Activated CD4-positive, alpha-beta T cell treated with anti-CD3 and anti-CD28 coated beads for 36 hours (primary cell): ENCODE measurements at regions of chr17 and their contacts with region 1.

Region 1: DNA sequence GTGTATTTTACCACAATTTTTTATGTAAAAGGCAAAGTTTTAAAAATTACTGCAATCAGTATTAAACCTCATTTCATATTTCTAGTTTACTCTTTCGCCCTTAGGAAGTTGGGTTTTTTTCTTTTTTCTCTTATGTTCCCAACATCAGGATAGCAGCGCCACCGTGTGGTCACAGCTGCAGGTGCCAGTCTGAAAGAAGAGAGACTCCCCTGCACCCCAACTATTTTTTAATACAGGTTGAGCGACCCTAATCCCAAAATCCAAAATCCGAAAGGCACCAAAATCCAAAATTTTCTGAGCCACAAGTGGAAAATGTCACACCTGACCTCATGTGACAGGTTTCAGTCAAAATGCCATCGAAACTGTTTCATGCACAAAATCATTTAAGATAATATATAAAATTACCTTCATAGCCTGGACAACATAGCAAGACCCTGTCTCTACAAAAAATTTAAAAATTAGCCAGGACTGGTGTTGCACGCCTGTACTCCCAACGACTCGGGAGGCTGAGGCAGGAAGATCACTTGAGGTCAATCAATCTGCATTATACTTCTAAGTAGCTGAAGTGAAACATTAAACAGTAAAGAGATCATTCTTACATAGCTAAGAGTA is 21.8 kb upstream of the ASGR2 start:
- DNase-seq: peak; percentile 89
- ATAC-seq: no peak
- H3K4me3 Mint-ChIP-seq: no peak overlapping the region
- H3K27ac Mint-ChIP-seq: no peak overlapping the region
- H3K4me1 Mint-ChIP-seq: peaks cover 21% of the 10 kb centered on the region
- H3K27me3 Mint-ChIP-seq: no peaks in the 10 kb centered on the region

Region 2: DNA sequence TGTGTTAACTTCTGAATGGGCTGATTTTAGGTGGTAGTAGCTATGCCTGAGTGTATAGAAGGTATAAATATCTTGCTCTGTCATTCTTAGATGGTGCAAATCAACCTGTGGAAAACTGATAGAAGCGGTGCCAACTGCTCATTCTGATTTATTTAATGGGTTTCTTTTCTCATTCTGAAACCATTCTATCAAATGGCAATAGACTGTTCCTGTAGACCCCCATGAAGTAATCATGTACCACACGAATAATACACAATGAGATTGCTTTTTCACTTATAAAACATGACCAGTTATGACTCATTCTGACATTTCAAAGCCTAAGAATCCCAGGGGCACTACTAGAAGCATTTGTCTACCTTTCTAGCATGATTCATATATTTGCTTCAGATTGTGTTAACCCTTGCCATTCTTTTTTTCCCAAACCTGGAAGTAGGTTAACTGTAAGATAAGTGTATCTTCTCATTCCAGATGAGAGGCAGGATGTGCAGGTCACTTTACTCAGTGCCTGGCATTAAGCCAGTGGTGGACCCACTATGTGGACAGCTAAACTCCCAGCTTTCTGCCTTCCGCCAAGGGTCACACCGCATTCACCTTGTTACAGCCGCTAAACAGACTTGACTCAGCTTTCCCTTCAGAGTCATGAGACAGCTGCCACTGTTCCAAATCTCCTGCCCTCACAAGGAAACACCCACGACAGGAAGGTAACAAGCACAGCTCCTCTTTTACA is 76.0 kb before region 1 on chr17:
- CTCF ChIA-PET with region 1: interaction called, 110 read pairs
- POLR2A ChIA-PET with region 1: interaction called, 10 read pairs
- intact Hi-C with region 1: loop called (anchors 2 kb)
- DNase-seq: peak; percentile 78
- ATAC-seq: peak; percentile 87
- H3K4me3 Mint-ChIP-seq: peak overlapping the region; percentile 49
- H3K27ac Mint-ChIP-seq: peak overlapping the region; percentile 88
- H3K4me1 Mint-ChIP-seq: peaks cover 26% of the 10 kb centered on the region
- H3K27me3 Mint-ChIP-seq: no peaks in the 10 kb centered on the region

Region 3: DNA sequence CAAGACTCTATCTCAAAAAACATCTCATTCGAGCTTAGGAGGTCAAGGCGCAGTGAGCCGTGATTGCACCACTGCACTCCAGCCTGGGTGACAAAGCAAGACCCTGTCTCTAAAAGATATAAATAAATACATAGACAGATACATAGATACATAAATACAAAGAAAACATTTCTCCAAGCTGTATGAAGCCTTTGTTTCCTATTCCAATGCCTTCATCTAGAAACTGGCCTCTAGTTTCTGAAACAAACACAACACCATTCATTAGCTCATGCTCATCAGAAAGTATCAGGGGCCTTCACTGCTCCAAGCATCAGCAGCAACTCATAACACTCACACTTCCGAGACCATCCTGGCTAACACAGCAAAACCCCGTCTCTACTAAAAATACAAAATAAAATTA is 11.4 kb before region 1 on chr17:
- CTCF ChIA-PET with region 1: interaction called, 11 read pairs
- POLR2A ChIA-PET with region 1: no interaction called
- intact Hi-C with region 1: no loop called
- DNase-seq: no peak
- ATAC-seq: no peak
- H3K4me3 Mint-ChIP-seq: no peak overlapping the region
- H3K27ac Mint-ChIP-seq: no peak overlapping the region
- H3K4me1 Mint-ChIP-seq: no peaks in the 10 kb centered on the region
- H3K27me3 Mint-ChIP-seq: peaks cover 4% of the 10 kb centered on the region

Region 4: DNA sequence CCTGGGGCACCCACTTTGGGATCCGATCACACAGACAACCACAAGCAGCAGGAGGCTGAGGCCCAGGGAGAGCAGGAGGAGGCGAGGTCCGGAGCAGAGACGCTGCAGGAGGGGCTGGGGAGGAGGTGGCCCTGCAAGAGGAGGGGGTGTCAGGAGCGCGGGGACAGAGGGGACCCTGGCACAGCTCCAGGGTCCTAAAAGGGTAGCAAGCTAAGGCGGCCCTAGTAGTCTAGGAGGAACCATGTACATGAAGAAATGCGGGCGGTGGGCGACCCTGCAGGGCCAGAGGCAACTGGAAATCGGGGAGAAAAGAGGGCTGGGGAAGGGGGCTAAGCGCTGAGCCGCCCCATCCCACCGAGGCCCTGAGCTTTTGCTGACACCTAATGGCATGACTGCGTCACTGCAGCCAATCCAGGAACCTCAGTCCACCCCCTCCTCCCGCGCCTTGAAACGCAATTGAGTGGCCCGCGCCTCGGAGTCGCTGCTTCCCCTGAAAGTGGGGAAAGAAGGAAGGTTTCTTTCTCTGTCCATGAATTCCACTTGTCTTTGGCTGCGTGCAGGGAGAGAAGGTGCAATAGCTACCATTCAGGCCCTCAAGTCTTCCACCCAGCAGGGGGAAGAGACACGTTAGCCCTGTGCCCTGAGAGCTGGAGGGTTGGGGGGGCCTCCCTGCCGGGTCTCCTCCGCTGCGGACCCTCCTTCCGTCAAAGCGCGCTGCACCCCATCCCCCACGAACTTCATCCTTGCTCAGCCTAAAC is 41.0 kb after region 1 on chr17:
- CTCF ChIA-PET with region 1: interaction called, 14 read pairs
- POLR2A ChIA-PET with region 1: no interaction called
- intact Hi-C with region 1: loop called (anchors 1 to 5 kb)
- DNase-seq: peak; percentile 82
- ATAC-seq: peak; percentile 82
- H3K4me3 Mint-ChIP-seq: peak overlapping the region; percentile 56
- H3K27ac Mint-ChIP-seq: no peak overlapping the region
- H3K4me1 Mint-ChIP-seq: peaks cover 11% of the 10 kb centered on the region
- H3K27me3 Mint-ChIP-seq: peaks cover 11% of the 10 kb centered on the region

Region 5: DNA sequence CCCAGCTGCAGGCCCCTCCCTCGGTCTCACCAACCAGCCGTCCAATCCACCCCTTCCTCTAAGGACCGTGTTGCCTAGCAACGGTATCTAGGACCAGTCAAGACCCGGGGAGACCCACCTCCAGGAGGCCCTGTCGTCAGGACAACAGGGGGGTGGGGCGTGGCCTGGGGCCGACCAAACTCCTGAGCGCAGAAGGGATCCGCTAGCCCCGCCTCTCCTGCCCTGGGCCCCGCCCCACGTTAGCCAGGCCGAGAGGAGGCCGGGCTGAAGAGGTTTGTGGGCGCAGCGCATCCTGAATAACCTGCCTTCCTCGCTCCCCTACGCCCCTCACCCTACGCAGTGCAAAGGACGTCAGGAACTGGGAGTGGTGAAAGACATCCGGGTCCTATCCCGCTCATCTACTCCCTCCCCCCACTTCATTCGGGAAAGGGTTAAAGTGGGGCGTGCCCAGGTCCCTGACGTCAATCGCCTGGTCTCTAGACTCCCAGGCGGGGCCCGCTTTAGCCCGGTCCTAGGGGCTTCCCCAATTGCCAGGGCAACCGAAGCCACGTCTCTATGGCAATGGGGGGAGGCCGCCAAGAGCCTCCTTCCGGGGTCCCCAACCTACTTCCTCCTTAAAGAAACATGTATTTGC is 68.6 kb after region 1 on chr17:
- CTCF ChIA-PET with region 1: no interaction called
- POLR2A ChIA-PET with region 1: no interaction called
- intact Hi-C with region 1: no loop called
- DNase-seq: peak; percentile 95
- ATAC-seq: peak; percentile 92
- H3K4me3 Mint-ChIP-seq: peak overlapping the region; percentile 75
- H3K27ac Mint-ChIP-seq: peak overlapping the region; percentile 83
- H3K4me1 Mint-ChIP-seq: peaks cover 24% of the 10 kb centered on the region
- H3K27me3 Mint-ChIP-seq: no peaks in the 10 kb centered on the region

Region 6: GRCh38 chr17:7296189-7296902 is 160.0 kb after region 1 on chr17:
- CTCF ChIA-PET with region 1: interaction called, 3 read pairs
- POLR2A ChIA-PET with region 1: no interaction called
- intact Hi-C with region 1: loop called in 1 of 2 experiments (anchors 10 kb)
- DNase-seq: peak; percentile 83
- ATAC-seq: peak; percentile 38
- H3K4me3 Mint-ChIP-seq: peak overlapping the region; percentile 35
- H3K27ac Mint-ChIP-seq: no peak overlapping the region
- H3K4me1 Mint-ChIP-seq: peaks cover 23% of the 10 kb centered on the region
- H3K27me3 Mint-ChIP-seq: peaks cover 19% of the 10 kb centered on the region

Region 7: DNA sequence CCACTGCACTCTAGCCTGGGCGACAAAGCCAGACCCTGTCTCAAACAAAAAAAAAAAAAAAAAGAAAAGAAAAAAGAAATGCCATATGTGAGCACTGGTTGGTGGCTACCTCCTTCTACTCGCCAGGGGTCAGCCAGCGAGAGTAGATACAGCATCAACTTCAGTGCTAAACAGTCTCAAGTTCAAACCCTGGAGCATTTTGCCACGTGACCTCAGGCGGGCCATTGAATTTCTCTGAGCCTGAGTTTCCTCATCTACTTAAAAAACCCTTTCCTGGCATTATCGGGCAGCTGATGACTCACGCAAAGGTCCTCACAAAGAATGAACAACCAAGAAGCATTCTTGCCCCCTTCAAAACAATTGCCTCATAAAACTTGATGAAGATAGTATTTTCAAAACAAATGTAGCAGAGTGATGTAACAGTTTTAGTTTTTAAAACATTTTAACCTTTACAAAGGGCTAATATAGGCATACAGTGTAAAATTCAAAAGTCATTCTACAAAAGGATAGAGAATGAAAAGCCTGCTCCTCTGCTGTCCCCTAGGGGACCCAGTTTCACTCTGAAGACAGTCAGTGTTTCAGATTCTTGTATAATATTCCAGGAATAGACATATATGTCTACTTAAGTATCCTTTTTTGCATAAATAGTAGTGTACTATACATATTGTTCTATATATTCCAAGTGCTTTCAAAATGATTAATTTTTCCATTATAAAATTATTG is 609.5 kb after region 1 on chr17:
- CTCF ChIA-PET with region 1: no interaction called
- POLR2A ChIA-PET with region 1: interaction called, 10 read pairs
- intact Hi-C with region 1: no loop called
- DNase-seq: no peak
- ATAC-seq: no peak
- H3K4me3 Mint-ChIP-seq: no peak overlapping the region
- H3K27ac Mint-ChIP-seq: no peak overlapping the region
- H3K4me1 Mint-ChIP-seq: no peaks in the 10 kb centered on the region
- H3K27me3 Mint-ChIP-seq: peaks cover 3% of the 10 kb centered on the region